ENCODE measurements at regions of chr5 and their contacts with region 1.

Region 1: GRCh38 chr5:139417214-139417613 is 13.3 kb upstream of the SPATA24 start:
- DNase-seq: no peak
- H3K4me3 Mint-ChIP-seq: no peak overlapping the region
- H3K27ac Mint-ChIP-seq: peak overlapping the region; percentile 97
- H3K4me1 Mint-ChIP-seq: peaks cover 59% of the 10 kb centered on the region
- H3K27me3 Mint-ChIP-seq: no peaks in the 10 kb centered on the region

Region 2: DNA sequence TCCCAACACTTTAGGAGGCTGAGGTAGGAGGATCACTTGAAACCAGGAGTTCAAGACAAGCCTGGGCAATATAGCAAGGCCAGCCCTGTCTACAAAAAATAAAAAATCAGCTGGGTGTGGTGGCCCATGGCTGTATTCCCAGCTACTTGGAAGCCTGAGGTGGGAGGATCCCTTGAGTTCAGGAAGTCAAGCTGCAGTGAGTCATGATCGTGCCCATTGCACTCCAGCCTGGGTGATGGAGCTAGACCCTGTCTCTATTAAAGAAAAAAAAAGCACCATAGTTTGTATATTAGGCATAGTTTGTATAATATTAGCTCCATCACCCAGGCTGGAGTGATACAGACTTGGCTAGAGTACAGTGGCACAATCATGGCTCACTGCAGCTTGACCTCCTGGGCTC is 1268.4 kb before region 1 on chr5:
- intact Hi-C with region 1: no loop called
- DNase-seq: no peak
- H3K4me3 Mint-ChIP-seq: no peak overlapping the region
- H3K27ac Mint-ChIP-seq: no peak overlapping the region
- H3K4me1 Mint-ChIP-seq: no peaks in the 10 kb centered on the region
- H3K27me3 Mint-ChIP-seq: peaks cover 2% of the 10 kb centered on the region

Region 3: GRCh38 chr5:139403787-139404483 is 13.3 kb before region 1 on chr5 and contains the start of gene SPATA24:
- intact Hi-C with region 1: loop called (anchors 1 kb)
- DNase-seq: peak; percentile 98
- H3K4me3 Mint-ChIP-seq: peak within 1 kb of the TSS; percentile 92
- H3K27ac Mint-ChIP-seq: peak within 1 kb of the TSS; percentile 100
- H3K4me1 Mint-ChIP-seq: peaks cover 31% of the 10 kb centered on the region
- H3K27me3 Mint-ChIP-seq: no peaks in the 10 kb centered on the region
- total RNA-seq, gene SPATA24: 4.7 and 4.8 TPM in 2 replicates

Region 4: DNA sequence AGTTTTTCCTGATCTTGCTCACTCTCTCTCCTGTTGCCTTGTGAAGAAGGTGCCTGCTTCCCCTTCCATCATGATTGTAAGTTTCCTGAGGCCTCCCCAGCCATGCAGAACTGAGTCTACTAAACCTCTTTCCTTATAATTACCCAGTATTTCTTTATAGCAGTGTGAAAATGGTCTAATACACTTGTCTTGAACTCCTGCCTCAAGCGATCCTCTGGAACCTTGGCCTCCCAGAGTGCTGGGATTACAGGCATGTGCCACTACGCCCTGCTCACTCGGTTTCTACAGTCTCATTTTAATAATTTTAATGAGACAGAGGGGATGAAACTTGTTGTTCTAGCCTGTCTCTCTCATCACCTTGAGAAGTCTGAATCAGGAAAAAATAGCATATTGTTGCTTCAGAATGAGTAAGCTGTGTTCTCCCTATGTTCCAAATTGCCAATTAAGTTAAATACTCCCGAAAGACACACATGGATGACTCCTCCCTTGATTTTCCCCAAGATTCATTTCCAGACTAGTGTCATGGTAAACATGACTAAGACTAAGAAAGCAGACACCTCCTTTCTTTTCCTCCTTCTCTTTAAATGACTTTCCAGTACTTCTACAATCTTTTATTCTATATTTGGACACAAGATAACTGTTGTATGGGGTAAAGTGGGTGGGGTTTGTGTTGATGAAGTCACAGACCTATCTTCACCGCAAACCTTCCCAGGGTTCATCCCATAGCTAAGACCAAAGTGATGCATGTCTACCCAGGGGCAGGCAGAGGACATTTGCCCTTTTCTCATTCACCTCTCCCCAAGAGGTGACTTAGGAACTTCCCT is 30.0 kb after region 1 on chr5:
- intact Hi-C with region 1: loop called (anchors 1 kb)
- DNase-seq: no peak
- H3K4me3 Mint-ChIP-seq: peak overlapping the region; percentile 53
- H3K27ac Mint-ChIP-seq: peak overlapping the region; percentile 96
- H3K4me1 Mint-ChIP-seq: peaks cover 55% of the 10 kb centered on the region
- H3K27me3 Mint-ChIP-seq: no peaks in the 10 kb centered on the region

Region 5: GRCh38 chr5:139482050-139482889 is 65.1 kb after region 1 on chr5 and contains the start of gene STING1:
- intact Hi-C with region 1: loop called (anchors 2 kb)
- DNase-seq: peak; percentile 55
- H3K4me3 Mint-ChIP-seq: peak within 1 kb of the TSS; percentile 88
- H3K27ac Mint-ChIP-seq: peak within 1 kb of the TSS; percentile 99
- H3K4me1 Mint-ChIP-seq: peaks cover 30% of the 10 kb centered on the region
- H3K27me3 Mint-ChIP-seq: no peaks in the 10 kb centered on the region
- total RNA-seq, gene STING1: 167 and 169 TPM in 2 replicates

Region 6: GRCh38 chr5:139633295-139634027 is 216.2 kb after region 1 on chr5:
- intact Hi-C with region 1: loop called (anchors 10 kb)
- DNase-seq: peak; percentile 53
- H3K4me3 Mint-ChIP-seq: no peak overlapping the region
- H3K27ac Mint-ChIP-seq: no peak overlapping the region
- H3K4me1 Mint-ChIP-seq: peaks cover 32% of the 10 kb centered on the region
- H3K27me3 Mint-ChIP-seq: no peaks in the 10 kb centered on the region